ENCODE measurements at regions of chr7 and their contacts with region 1.

Region 1: DNA sequence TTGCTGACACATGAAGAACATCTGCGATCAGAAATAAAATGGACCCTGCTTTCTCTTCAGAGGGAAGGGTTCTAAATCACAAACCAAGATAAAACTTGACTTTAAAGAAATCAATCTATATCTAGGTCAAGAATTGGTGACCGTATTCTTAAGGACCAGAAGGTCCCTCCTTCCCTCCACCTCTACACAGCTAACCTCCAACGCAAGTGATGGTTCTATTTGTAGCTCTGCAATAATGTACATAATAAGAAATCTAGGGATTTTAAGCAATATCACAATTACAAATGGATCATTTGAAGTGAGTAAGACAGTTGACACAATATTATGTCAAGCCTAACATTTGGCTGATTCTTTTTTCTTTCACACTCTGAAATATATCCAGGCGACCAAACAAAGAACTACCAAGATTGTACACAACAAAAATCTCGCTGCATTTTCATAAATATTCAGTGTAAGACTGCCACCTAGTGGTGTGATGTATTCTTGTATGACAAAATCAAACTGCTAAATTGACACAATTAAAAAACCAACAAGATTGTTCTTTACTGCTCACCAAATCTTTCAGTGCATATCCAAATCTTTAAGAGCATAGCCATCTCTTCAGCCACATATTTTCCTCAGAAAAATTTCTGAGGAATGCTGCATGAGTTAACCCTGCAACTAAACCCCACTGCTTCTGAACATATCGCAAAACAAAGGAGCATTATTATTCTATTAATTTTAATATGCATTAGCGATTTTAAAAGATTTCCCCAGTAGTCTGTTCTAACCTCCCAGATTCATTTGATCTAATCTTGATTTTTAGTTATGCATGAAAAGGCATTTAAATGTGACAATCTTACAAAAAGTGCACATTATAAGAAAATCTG is 44.5 kb downstream of the ICA1 start:
- DNase-seq: peak; percentile 86
- H3K4me3 Mint-ChIP-seq: no peak overlapping the region
- H3K27ac Mint-ChIP-seq: no peak overlapping the region
- H3K4me1 Mint-ChIP-seq: peaks cover 4% of the 10 kb centered on the region
- H3K27me3 Mint-ChIP-seq: no peaks in the 10 kb centered on the region

Region 2: GRCh38 chr7:7103343-7104313 is 1113.8 kb before region 1 on chr7:
- intact Hi-C with region 1: loop called (anchors 1 kb)
- DNase-seq: peak; percentile 57
- H3K4me3 Mint-ChIP-seq: no peak overlapping the region
- H3K27ac Mint-ChIP-seq: no peak overlapping the region
- H3K4me1 Mint-ChIP-seq: peaks cover 16% of the 10 kb centered on the region
- H3K27me3 Mint-ChIP-seq: no peaks in the 10 kb centered on the region

Region 3: DNA sequence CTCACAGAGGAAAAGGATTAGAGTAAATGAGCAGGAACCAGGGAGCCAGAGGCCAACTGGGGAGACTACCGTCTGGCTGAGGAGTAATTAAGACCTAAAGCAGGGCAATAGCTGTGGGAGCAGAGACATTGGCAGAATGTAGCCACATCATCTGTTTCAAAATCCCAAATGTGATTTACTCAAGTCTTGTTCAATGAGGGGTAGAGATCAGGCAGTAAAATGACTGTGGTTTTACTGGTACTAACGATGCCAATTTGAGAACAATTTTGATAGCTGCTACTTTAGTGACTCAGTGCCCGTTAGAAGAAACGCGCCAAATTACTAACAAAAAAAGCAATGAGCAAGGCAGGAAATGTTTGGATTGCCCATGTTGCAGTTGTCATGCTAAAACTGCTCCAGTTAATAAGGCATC is 663.4 kb before region 1 on chr7:
- intact Hi-C with region 1: loop called (anchors 5 kb)
- DNase-seq: no peak
- H3K4me3 Mint-ChIP-seq: no peak overlapping the region
- H3K27ac Mint-ChIP-seq: no peak overlapping the region
- H3K4me1 Mint-ChIP-seq: no peaks in the 10 kb centered on the region
- H3K27me3 Mint-ChIP-seq: peaks cover 38% of the 10 kb centered on the region

Region 4: GRCh38 chr7:7681179-7681935 is 536.1 kb before region 1 on chr7:
- intact Hi-C with region 1: loop called (anchors 1 kb)
- DNase-seq: peak; percentile 84
- H3K4me3 Mint-ChIP-seq: no peak overlapping the region
- H3K27ac Mint-ChIP-seq: no peak overlapping the region
- H3K4me1 Mint-ChIP-seq: peaks cover 8% of the 10 kb centered on the region
- H3K27me3 Mint-ChIP-seq: no peaks in the 10 kb centered on the region

Region 5: GRCh38 chr7:8295638-8296361 is 78.4 kb after region 1 on chr7:
- intact Hi-C with region 1: loop called (anchors 5 kb)
- DNase-seq: peak; percentile 80
- H3K4me3 Mint-ChIP-seq: no peak overlapping the region
- H3K27ac Mint-ChIP-seq: no peak overlapping the region
- H3K4me1 Mint-ChIP-seq: peaks cover 3% of the 10 kb centered on the region
- H3K27me3 Mint-ChIP-seq: peaks cover 28% of the 10 kb centered on the region

Region 6: DNA sequence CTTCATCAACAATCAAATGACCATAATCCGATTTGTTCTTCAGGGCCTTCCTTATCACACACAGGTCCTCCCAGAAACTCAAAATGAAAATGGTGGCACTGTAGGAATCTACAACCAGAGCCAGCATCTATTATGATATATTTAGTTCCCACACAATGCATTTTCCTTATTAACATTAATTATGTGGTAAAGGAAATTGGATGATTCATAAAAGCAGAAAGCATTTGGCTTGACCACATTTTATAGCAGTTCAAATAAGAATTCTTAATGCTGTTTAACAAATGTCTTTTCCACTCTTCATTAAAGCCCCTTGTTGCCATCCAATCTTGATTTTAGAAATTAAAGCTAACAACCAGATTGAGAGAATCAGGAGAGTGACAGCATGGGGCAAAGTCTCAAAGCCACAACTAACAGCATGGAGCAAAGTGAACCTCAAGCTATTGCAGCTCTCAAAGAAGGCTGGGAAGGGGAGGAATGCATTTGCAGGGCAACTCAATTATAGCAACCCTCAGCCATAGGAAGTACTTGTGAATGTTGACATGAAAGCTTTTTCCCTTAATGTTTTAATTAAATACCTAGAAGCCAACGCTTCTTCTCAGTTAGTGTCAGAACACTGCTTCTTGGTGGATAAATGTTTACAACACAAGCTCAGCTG is 765.0 kb after region 1 on chr7:
- intact Hi-C with region 1: no loop called
- DNase-seq: no peak
- H3K4me3 Mint-ChIP-seq: no peak overlapping the region
- H3K27ac Mint-ChIP-seq: no peak overlapping the region
- H3K4me1 Mint-ChIP-seq: no peaks in the 10 kb centered on the region
- H3K27me3 Mint-ChIP-seq: no peaks in the 10 kb centered on the region